ENCODE measurements at regions of chr2 and their contacts with region 1.

Region 1: GRCh38 chr2:170425281-170425751 is 247.4 kb downstream of the MYO3B start:
- DNase-seq: peak; percentile 32
- H3K4me3 ChIP-seq: no peak overlapping the region
- H3K27ac ChIP-seq: no peak overlapping the region
- H3K4me1 ChIP-seq: no peaks in the 10 kb centered on the region
- H3K27me3 ChIP-seq: no peaks in the 10 kb centered on the region
- CTCF ChIP-seq: no peak

Region 2: GRCh38 chr2:169590804-169591203 is 834.5 kb before region 1 on chr2:
- CTCF ChIA-PET with region 1: no interaction called
- POLR2A ChIA-PET with region 1: no interaction called
- intact Hi-C with region 1: no loop called
- DNase-seq: no peak
- H3K4me3 ChIP-seq: no peak overlapping the region
- H3K27ac ChIP-seq: no peak overlapping the region
- H3K4me1 ChIP-seq: peaks cover 6% of the 10 kb centered on the region
- H3K27me3 ChIP-seq: no peaks in the 10 kb centered on the region
- CTCF ChIP-seq: no peak

Region 3: GRCh38 chr2:169716938-169717690 is 708.2 kb before region 1 on chr2:
- CTCF ChIA-PET with region 1: no interaction called
- POLR2A ChIA-PET with region 1: no interaction called
- intact Hi-C with region 1: no loop called
- DNase-seq: no peak
- H3K4me3 ChIP-seq: no peak overlapping the region
- H3K27ac ChIP-seq: no peak overlapping the region
- H3K4me1 ChIP-seq: no peaks in the 10 kb centered on the region
- H3K27me3 ChIP-seq: no peaks in the 10 kb centered on the region
- CTCF ChIP-seq: no peak

Region 4: GRCh38 chr2:170485254-170486026 is 60.1 kb after region 1 on chr2:
- CTCF ChIA-PET with region 1: interaction called, 10 read pairs
- POLR2A ChIA-PET with region 1: no interaction called
- intact Hi-C with region 1: no loop called
- DNase-seq: no peak
- H3K4me3 ChIP-seq: no peak overlapping the region
- H3K27ac ChIP-seq: no peak overlapping the region
- H3K4me1 ChIP-seq: no peaks in the 10 kb centered on the region
- H3K27me3 ChIP-seq: no peaks in the 10 kb centered on the region
- CTCF ChIP-seq: no peak

Region 5: GRCh38 chr2:170505631-170506275 is 80.4 kb after region 1 on chr2:
- CTCF ChIA-PET with region 1: no interaction called
- POLR2A ChIA-PET with region 1: no interaction called
- intact Hi-C with region 1: no loop called
- DNase-seq: peak; percentile 13
- H3K4me3 ChIP-seq: no peak overlapping the region
- H3K27ac ChIP-seq: no peak overlapping the region
- H3K4me1 ChIP-seq: peaks cover 45% of the 10 kb centered on the region
- H3K27me3 ChIP-seq: no peaks in the 10 kb centered on the region
- CTCF ChIP-seq: no peak

Region 6: DNA sequence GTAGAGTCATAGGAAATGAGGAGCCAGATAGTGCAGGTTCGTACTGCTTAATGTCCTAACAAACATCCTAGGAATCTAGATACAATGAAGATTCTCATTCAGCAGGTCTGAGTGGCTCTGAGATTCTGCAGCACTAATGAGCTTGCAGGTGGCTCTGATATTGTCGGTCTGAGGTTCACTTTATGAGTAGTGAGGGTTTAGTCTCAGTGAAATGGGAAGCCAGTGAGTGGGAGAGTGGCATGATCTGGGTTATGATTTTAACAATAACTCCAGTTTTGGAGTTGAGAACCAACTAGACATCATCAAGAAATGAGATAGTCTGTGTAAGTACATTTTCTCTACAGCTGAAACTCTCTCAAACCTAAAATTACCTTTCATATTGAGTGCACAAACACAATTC is 123.0 kb after region 1 on chr2:
- CTCF ChIA-PET with region 1: no interaction called
- POLR2A ChIA-PET with region 1: no interaction called
- intact Hi-C with region 1: no loop called
- DNase-seq: no peak
- H3K4me3 ChIP-seq: no peak overlapping the region
- H3K27ac ChIP-seq: no peak overlapping the region
- H3K4me1 ChIP-seq: no peaks in the 10 kb centered on the region
- H3K27me3 ChIP-seq: no peaks in the 10 kb centered on the region
- CTCF ChIP-seq: no peak